CD4-positive, alpha-beta memory T cell (primary cell): ENCODE measurements at regions of chr9 and their contacts with region 1.

Region 1: GRCh38 chr9:120842690-120843499 is at the start of gene PSMD5:
- DNase-seq: peak; percentile 93 to 99 (median 99)
- H3K4me3 ChIP-seq: peak within 1 kb of the TSS; percentile 78 to 84
- H3K4me3 Mint-ChIP-seq: peak within 1 kb of the TSS; percentile 92 to 98 (median 96)
- H3K27ac ChIP-seq: peak within 1 kb of the TSS; percentile 98
- H3K27ac Mint-ChIP-seq: peak within 1 kb of the TSS; percentile 96 to 98 (median 98)
- H3K4me1 ChIP-seq: peaks cover 75% of the 10 kb centered on the region
- H3K4me1 Mint-ChIP-seq: peaks cover 62 to 84% (median 73%) of the 10 kb centered on the region in 4 donors
- H3K27me3 ChIP-seq: no peaks in the 10 kb centered on the region
- H3K27me3 Mint-ChIP-seq: no peaks in the 10 kb centered on the region
- total RNA-seq, gene PSMD5: 46.4 to 59.0 TPM

Region 2: DNA sequence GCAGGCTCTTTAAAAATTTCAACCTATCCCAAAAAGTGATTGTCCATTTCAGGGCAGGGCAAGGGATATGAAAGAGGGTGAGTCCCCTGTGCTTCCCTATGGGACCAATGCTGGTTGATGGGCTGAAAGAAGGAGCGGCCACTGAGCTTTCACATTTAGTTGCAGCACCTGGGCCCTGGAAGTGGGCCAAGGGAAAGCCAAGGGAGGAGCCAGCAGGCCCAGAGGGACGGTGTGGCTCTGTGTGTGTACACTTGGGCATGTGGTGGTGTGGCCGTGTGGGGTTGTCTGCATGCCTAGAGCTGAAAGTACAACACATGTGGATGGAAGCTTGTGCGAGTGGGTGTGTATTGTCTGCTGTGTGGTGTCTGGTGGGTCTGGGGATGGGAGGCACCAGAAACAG is 13.8 kb after region 1 on chr9:
- CTCF ChIA-PET with region 1: interaction called, 3 read pairs
- POLR2A ChIA-PET with region 1: interaction called, 89 read pairs
- intact Hi-C with region 1: no loop called
- DNase-seq: no peak
- H3K4me3 ChIP-seq: no peak overlapping the region
- H3K4me3 Mint-ChIP-seq: no peak overlapping the region
- H3K27ac ChIP-seq: no peak overlapping the region
- H3K27ac Mint-ChIP-seq: peak overlapping the region in 4 of 7 donors; percentile 8 to 83 (median 40)
- H3K4me1 ChIP-seq: no peaks in the 10 kb centered on the region
- H3K4me1 Mint-ChIP-seq: peaks cover 0 to 3% (median under 1%) of the 10 kb centered on the region in 4 donors
- H3K27me3 ChIP-seq: no peaks in the 10 kb centered on the region
- H3K27me3 Mint-ChIP-seq: no peaks in the 10 kb centered on the region

Region 3: GRCh38 chr9:120904061-120904977 is 61.4 kb after region 1 on chr9:
- CTCF ChIA-PET with region 1: interaction called, 3 read pairs
- POLR2A ChIA-PET with region 1: interaction called, 10 read pairs
- intact Hi-C with region 1: no loop called
- DNase-seq: peak; percentile 76 to 89 (median 80)
- H3K4me3 ChIP-seq: no peak overlapping the region
- H3K4me3 Mint-ChIP-seq: peak overlapping the region in 7 of 8 donors; percentile 55 to 75 (median 72)
- H3K27ac ChIP-seq: peak overlapping the region; percentile 79
- H3K27ac Mint-ChIP-seq: peak overlapping the region; percentile 93 to 99 (median 98)
- H3K4me1 ChIP-seq: peaks cover 91% of the 10 kb centered on the region
- H3K4me1 Mint-ChIP-seq: peaks cover 55 to 88% (median 71%) of the 10 kb centered on the region in 4 donors
- H3K27me3 ChIP-seq: no peaks in the 10 kb centered on the region
- H3K27me3 Mint-ChIP-seq: no peaks in the 10 kb centered on the region

Region 4: DNA sequence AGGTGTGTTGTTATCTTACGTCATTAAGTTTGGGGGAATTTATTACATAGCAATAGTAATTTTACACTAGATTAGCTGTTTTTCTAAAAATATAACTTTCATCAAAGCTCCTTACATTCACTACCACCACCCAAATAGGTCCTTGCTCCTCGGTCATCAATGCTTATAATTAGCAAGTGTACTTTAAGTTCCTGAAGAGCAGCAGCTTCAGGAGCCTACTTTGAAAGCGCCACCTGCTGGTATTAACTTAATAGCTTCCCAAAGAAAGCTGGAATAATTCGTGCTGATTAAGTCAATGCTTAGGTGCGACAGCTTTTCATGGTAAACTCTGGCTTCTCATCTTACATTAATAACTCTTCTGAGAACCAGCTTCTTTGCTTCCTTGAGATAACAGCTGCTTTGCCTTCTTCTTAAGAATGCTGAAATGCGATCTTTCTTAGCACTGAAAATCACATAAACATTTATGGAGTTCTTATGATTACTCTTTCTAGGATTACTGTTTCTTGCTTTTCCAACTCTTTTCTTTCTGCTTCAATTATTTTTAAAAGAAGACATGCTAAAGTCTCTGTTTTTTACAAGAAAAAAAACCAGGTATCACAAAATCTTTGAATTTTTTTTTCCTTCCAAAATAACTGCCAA is 217.2 kb after region 1 on chr9:
- CTCF ChIA-PET with region 1: interaction called, 12 read pairs
- POLR2A ChIA-PET with region 1: no interaction called
- intact Hi-C with region 1: no loop called
- DNase-seq: peak in 4 of 5 donors; percentile 48 to 57 (median 50)
- H3K4me3 ChIP-seq: no peak overlapping the region
- H3K4me3 Mint-ChIP-seq: no peak overlapping the region
- H3K27ac ChIP-seq: no peak overlapping the region
- H3K27ac Mint-ChIP-seq: peak overlapping the region in 1 of 7 donors; percentile 20
- H3K4me1 ChIP-seq: peaks cover 27% of the 10 kb centered on the region
- H3K4me1 Mint-ChIP-seq: peaks cover 16 to 18% (median 17%) of the 10 kb centered on the region in 4 donors
- H3K27me3 ChIP-seq: no peaks in the 10 kb centered on the region
- H3K27me3 Mint-ChIP-seq: no peaks in the 10 kb centered on the region